Lower leg skin (tissue), 4 donors: ENCODE measurements at regions of chr16 and their contacts with region 1.

Region 1: DNA sequence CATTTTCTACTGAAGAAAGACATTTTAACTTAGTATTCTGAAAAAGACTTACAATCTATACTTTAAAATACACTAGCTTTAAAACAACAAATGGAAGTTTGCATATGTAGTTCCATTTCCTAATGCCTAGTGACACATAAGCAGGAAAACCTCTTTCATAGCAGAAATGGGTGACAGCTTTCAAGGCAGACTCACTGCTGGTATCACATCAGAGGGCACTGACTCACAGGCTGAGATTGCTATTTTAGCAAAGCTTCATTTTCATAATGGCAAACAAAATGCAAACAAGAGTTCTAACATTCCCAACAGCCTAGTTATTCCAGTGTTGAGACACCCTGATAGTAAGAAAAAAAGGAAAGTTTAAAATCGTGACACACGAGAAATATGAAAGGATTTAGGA is 19.0 kb downstream of the GSPT1 start:
- DNase-seq: no peak
- H3K4me3 ChIP-seq: no peak overlapping the region
- CTCF ChIP-seq: no peak
- POLR2A ChIP-seq: no peak

Region 2: DNA sequence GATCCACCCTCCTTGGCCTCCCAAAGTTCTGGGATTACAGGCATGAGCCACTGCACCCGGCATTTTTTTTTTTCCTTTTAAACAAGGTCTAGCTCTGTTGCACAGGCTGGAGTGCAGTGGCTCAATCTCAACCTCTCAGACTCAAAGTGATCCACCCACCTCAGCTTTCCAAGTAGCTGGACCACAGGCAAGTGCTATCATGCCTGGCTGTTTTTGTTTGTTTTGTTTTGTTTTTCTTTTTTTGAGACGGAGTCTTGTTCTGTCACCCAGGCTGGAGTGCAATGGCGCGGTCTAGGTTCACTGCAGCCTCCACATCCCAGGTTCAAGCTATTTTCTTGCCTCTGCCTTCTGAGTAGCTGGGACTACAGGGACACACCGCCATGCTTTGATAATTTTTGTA is 80.7 kb before region 1 on chr16:
- intact Hi-C with region 1: no loop called
- DNase-seq: no peak
- H3K4me3 ChIP-seq: no peak overlapping the region
- CTCF ChIP-seq: no peak
- POLR2A ChIP-seq: no peak

Region 3: GRCh38 chr16:13708347-13709120 is 1811.8 kb after region 1 on chr16:
- intact Hi-C with region 1: loop called (anchors 5 kb)
- DNase-seq: no peak
- H3K4me3 ChIP-seq: no peak overlapping the region
- CTCF ChIP-seq: no peak
- POLR2A ChIP-seq: no peak